Activated CD8-positive, alpha-beta T cell treated with anti-CD3 and anti-CD28 coated beads, Interleukin-2, amount 10 ng/mL, durations not matched to agents 7 days and 5 days (primary cell): ENCODE measurements at regions of chr12 and their contacts with region 1.

Region 1: GRCh38 chr12:104381731-104382480 is 74.8 kb upstream of the CHST11 start:
- DNase-seq: peak; percentile 90
- ATAC-seq: peak; percentile 90
- H3K4me3 Mint-ChIP-seq: no peak overlapping the region
- H3K27ac Mint-ChIP-seq: no peak overlapping the region
- H3K4me1 Mint-ChIP-seq: peaks cover 18% of the 10 kb centered on the region
- H3K27me3 Mint-ChIP-seq: peaks cover 9% of the 10 kb centered on the region

Region 2: GRCh38 chr12:104319918-104320626 is 61.8 kb before region 1 on chr12:
- CTCF ChIA-PET with region 1: no interaction called
- POLR2A ChIA-PET with region 1: no interaction called
- DNase-seq: no peak
- ATAC-seq: no peak
- H3K4me3 Mint-ChIP-seq: no peak overlapping the region
- H3K27ac Mint-ChIP-seq: peak overlapping the region; percentile 30
- H3K4me1 Mint-ChIP-seq: peaks cover 1% of the 10 kb centered on the region
- H3K27me3 Mint-ChIP-seq: no peaks in the 10 kb centered on the region

Region 3: DNA sequence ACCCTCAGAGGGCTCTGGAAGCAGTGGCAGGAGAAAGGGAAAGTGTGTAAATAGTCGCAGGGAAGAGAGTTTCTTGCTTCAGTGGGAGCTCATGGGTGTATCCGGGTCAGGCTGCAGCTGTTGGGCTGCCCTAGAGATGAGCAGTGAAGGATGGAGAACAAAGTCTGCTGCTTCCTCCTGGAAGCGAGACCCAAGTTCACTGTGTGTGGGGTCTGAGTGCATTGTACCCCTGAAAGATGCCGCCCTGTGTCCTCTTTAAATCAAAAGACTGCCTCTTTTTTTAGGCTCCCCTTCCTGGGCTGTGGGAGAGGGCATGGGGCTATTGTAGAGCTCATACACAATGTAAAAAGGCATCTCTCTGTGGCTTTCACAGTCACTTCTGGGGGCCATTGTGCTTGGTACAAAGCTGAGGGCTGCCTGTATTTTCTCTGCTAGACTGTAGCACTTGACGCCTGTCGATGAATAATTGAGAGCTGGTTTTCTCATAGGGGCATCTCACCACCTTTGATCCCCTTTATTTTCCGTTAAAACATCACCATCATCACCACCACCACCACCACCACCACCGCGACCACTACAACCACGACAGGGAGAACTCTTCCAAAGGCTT is 91.6 kb after region 1 on chr12:
- CTCF ChIA-PET with region 1: interaction called, 15 read pairs
- POLR2A ChIA-PET with region 1: no interaction called
- DNase-seq: peak; percentile 48
- ATAC-seq: peak; percentile 48
- H3K4me3 Mint-ChIP-seq: peak overlapping the region; percentile 69
- H3K27ac Mint-ChIP-seq: peak overlapping the region; percentile 91
- H3K4me1 Mint-ChIP-seq: peaks cover 88% of the 10 kb centered on the region
- H3K27me3 Mint-ChIP-seq: no peaks in the 10 kb centered on the region

Region 4: GRCh38 chr12:104514112-104514810 is 132.4 kb after region 1 on chr12:
- CTCF ChIA-PET with region 1: interaction called, 17 read pairs
- POLR2A ChIA-PET with region 1: no interaction called
- DNase-seq: no peak
- ATAC-seq: no peak
- H3K4me3 Mint-ChIP-seq: no peak overlapping the region
- H3K27ac Mint-ChIP-seq: no peak overlapping the region
- H3K4me1 Mint-ChIP-seq: peaks cover 82% of the 10 kb centered on the region
- H3K27me3 Mint-ChIP-seq: no peaks in the 10 kb centered on the region

Region 5: DNA sequence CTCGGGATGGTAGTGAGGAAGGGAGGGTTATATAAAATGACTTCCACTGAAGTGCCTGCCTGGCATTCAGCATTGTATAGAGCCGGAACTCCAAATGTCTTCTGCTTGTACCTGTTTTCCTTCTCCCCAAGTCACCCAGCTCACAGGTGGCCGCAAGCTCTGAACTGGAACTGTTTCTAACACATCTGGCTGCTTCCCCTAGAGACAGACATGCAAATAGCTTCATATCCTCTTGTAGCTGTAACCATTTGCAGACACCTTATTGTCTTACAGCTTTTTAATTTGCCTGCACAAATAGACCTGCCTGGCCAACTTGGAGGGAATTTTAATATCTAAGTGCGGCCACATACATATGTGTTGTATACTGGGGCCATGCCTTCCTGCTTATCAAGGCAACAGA is 200.8 kb after region 1 on chr12:
- CTCF ChIA-PET with region 1: interaction called, 26 read pairs
- POLR2A ChIA-PET with region 1: no interaction called
- DNase-seq: no peak
- ATAC-seq: no peak
- H3K4me3 Mint-ChIP-seq: no peak overlapping the region
- H3K27ac Mint-ChIP-seq: no peak overlapping the region
- H3K4me1 Mint-ChIP-seq: peaks cover 60% of the 10 kb centered on the region
- H3K27me3 Mint-ChIP-seq: no peaks in the 10 kb centered on the region

Region 6: GRCh38 chr12:104680066-104680465 is 298.2 kb after region 1 on chr12:
- CTCF ChIA-PET with region 1: interaction called, 13 read pairs
- POLR2A ChIA-PET with region 1: no interaction called
- DNase-seq: peak; percentile 67
- ATAC-seq: peak; percentile 18
- H3K4me3 Mint-ChIP-seq: no peak overlapping the region
- H3K27ac Mint-ChIP-seq: peak overlapping the region; percentile 69
- H3K4me1 Mint-ChIP-seq: peaks cover 72% of the 10 kb centered on the region
- H3K27me3 Mint-ChIP-seq: no peaks in the 10 kb centered on the region

Region 7: GRCh38 chr12:105053116-105053572 is 671.2 kb after region 1 on chr12:
- CTCF ChIA-PET with region 1: interaction called, 39 read pairs
- POLR2A ChIA-PET with region 1: no interaction called
- DNase-seq: peak; percentile 84
- ATAC-seq: peak; percentile 79
- H3K4me3 Mint-ChIP-seq: no peak overlapping the region
- H3K27ac Mint-ChIP-seq: no peak overlapping the region
- H3K4me1 Mint-ChIP-seq: peaks cover 2% of the 10 kb centered on the region
- H3K27me3 Mint-ChIP-seq: peaks cover 7% of the 10 kb centered on the region